ENCODE measurements at regions of chr4 and their contacts with region 1.

Region 1: DNA sequence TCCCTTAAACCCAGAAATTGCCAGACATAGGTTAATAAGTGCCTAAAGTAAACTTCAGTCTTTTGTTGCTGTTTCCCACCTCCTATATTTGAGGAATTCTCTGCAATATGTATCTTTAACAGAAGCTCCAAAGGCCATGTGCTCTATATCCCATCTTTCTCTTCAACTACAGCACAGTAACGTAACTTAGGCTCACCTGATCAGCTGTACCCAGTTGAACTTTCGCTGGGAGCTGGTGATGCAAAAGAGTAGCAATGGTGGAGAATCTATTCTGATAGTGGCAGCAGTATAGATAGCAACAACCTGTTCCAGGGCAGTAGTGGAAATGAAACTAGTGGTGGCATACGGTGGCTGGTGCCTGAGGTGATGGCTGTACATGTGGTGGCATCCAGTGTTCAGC is 33.2 kb upstream of the YTHDC1 start:
- DNase-seq: no peak
- ATAC-seq: no peak
- H3K4me3 ChIP-seq: no peak overlapping the region
- H3K27ac ChIP-seq: no peak overlapping the region
- H3K4me1 ChIP-seq: no peaks in the 10 kb centered on the region
- H3K27me3 ChIP-seq: peaks cover 0 to 8% (median 7%) of the 10 kb centered on the region in 3 donors
- CTCF ChIP-seq: no peak
- POLR2A ChIP-seq: no peak

Region 2: DNA sequence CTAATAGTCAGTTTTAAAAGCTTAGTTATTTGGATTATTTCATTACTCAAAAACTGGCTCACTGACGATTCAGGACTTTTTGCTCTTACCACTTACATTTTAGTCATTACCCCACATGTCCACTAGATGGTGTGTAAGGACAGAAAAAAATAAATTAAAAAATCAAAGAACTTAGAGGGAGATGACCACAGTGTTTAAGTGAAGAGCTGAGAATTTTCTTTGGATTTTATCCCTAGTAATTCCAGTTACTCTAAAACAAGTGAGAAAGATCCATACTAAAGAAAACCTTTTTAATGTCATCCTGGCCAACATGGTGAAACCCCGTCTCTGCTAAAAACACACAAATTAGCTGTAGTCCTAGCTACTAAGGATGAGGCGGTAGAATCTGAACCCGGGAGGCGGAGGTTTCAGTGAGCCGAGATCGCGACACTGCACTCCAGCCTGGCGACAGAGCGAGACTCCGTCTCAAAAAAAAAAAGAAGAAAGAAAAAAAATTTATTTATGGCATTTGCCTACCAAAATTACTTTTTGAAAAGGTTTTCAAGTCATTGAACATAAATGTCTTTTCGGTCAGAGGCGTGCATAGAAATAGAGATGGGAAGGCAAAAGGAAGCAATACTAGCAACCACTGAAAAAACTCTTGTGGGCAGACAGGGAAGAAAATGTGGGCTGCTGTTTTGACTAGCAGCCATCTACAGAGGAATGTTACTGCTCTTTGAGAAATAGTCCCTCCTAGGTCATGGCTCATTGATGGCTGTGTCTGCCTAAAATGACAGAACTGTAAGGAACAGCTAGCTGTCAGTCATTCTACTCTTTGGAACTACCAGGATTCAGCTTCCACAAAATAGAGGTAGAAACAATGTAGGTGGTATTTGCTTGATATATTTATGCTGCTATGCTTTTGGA is 111.0 kb before region 1 on chr4:
- in situ Hi-C with region 1: loop called (anchors 5 kb)
- intact Hi-C with region 1: no loop called
- DNase-seq: no peak
- ATAC-seq: peak in 1 of 2 donors; percentile 42
- H3K4me3 ChIP-seq: no peak overlapping the region
- H3K27ac ChIP-seq: no peak overlapping the region
- H3K4me1 ChIP-seq: no peaks in the 10 kb centered on the region
- H3K27me3 ChIP-seq: no peaks in the 10 kb centered on the region
- CTCF ChIP-seq: peak; percentile 51 to 76 (median 73)
- POLR2A ChIP-seq: no peak

Region 3: DNA sequence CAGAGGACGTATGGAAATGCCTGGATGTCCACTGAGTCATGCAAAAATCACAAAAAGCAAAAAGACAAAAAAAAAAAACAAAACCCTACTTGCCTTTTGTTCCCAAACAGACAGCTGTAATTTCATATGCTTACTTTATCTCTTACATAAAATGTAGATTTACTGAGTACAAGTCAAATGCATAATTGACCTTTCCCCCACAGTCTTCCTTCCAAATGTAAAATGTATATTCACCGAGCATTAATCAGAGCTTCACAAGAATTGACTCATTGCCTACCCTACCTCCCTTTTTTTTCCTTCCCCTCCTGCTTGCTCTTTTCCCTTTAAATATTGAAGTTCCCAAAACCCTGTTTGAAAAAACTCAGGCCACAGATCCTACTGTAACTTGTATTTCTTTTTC is 105.1 kb before region 1 on chr4:
- in situ Hi-C with region 1: loop called (anchors 5 kb)
- intact Hi-C with region 1: no loop called
- DNase-seq: no peak
- ATAC-seq: no peak
- H3K4me3 ChIP-seq: no peak overlapping the region
- H3K27ac ChIP-seq: no peak overlapping the region
- H3K4me1 ChIP-seq: no peaks in the 10 kb centered on the region
- H3K27me3 ChIP-seq: no peaks in the 10 kb centered on the region
- CTCF ChIP-seq: no peak
- POLR2A ChIP-seq: no peak

Region 4: DNA sequence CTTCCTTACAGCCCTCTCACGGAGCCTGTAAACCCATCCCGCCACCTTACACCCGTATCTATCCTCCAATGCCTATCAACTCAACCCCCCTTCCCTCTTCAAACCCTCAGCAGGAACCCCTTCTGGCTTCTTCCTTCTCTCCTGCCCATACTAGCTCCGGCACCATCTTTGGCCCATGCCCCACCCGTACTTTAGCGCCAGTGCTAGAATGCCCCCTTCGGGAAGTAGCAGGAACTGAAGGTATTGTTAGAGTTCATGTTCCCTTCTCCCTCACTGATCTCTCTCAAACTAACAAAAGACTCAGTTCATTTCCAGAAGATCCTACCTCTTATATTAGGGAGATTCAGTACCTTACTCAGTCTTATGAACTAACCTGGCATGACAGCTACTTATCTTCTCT is 290.0 kb after region 1 on chr4:
- in situ Hi-C with region 1: no loop called
- intact Hi-C with region 1: no loop called
- DNase-seq: no peak
- ATAC-seq: no peak
- H3K4me3 ChIP-seq: no peak overlapping the region
- H3K27ac ChIP-seq: no peak overlapping the region
- H3K4me1 ChIP-seq: no peaks in the 10 kb centered on the region
- H3K27me3 ChIP-seq: no peaks in the 10 kb centered on the region
- CTCF ChIP-seq: no peak
- POLR2A ChIP-seq: no peak